ENCODE measurements at regions of chr6 and their contacts with region 1.

Region 1: GRCh38 chr6:39797752-39798151 is 5.6 kb downstream of the DAAM2 start:
- DNase-seq: no peak
- ATAC-seq: no peak

Region 2: DNA sequence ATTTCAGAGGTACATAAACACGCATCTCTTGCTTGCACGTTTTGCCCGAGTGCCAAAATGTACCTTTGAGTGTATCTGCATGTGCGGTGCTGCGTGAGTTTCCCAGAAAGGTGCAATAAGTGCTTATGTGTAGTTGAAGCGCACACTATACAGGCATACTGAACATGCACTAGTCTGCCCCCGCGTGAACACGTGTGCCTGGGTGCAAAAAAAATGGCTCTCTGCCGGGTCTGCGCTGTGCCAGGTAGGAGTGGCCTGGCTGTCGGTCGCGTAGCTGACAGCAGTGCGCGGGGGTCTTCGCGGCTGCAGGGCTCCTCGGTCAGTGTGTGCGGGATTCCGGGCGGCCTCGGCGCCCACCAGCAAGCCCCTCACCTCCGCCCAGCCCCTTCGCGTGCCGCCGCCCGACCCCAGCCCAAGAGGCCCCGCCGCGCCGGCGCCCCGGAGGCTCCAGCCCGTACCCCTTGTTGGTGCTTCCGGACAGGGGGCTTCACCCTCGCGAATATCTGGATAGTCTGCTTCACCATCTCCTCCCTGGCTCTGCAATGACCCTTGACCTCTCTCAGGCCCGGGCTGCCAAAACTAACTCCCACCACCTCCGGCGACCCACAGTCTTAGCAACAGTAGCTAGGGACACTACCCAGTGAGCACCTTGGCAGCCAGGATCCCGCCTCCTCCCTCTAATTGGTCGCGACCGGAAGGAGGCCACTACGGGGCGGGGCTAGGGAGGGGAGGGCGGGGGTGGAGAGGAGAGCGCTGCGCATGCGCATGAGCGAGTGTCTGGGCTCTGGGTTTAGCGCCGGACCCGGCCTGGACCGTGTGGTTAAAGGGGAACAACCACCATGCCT is 72.7 kb before region 1 on chr6 and contains the start of gene KIF6:
- intact Hi-C with region 1: no loop called
- DNase-seq: peak; percentile 94
- ATAC-seq: peak; percentile 99
- total RNA-seq, gene KIF6: 0.53 TPM

Region 3: DNA sequence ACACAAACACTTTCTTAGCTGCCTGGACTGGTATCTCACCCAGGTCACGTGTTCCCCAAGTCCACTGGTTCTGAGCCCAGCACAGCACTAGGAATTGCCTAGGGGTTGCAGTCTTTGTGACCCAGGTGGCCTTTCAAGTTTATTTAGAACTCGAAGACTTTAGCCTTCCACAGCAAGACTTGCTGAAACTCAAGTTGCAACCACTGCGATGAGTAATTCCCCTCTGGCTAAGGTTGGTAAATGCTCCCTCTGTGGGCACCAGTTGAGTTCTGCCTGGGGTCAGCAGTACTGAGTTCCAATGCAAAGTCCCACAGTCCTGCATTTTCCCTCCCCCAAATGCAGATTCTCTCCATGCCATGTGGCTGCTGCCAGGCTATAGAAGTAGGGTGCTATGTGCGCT is 214.1 kb after region 1 on chr6:
- intact Hi-C with region 1: no loop called
- DNase-seq: no peak
- ATAC-seq: no peak

Region 4: GRCh38 chr6:40167036-40167435 is 369.3 kb after region 1 on chr6:
- intact Hi-C with region 1: loop called (anchors 5 kb)
- DNase-seq: no peak
- ATAC-seq: no peak

Region 5: GRCh38 chr6:41051873-41052272 is 1254.1 kb after region 1 on chr6:
- intact Hi-C with region 1: no loop called
- DNase-seq: no peak
- ATAC-seq: no peak

Measured in sciatic nerve (tissue), 2 donors.